Right cardiac atrium (tissue), 5 donors: ENCODE measurements at regions of chr10 and their contacts with region 1.

Region 1: GRCh38 chr10:87878664-87879459 is 15.4 kb downstream of the PTEN start:
- DNase-seq: peak in 1 of 3 donors; percentile 39
- ATAC-seq: no peak
- H3K4me3 ChIP-seq: no peak overlapping the region
- H3K27ac ChIP-seq: no peak overlapping the region
- H3K4me1 ChIP-seq: no peaks in the 10 kb centered on the region
- H3K27me3 ChIP-seq: no peaks in the 10 kb centered on the region

Region 2: DNA sequence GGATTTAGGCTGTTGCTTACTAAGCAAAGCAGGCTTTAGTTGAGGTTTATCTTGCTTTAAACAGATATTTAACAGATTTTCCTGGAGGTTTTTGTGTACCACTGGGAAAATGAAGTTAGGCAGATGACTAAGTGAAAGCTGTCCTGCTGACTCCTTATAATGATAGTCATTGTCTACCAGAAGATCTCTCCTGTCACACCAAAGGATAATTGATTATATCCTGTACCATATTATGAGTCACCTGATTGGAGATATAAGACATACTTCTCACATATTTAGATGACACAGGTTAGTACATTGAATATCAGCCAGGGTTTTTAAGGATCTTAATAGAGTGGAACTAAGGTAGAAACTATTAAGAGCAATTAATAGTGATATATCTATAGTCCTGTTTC is 53.0 kb after region 1 on chr10:
- intact Hi-C with region 1: loop called in 1 of 4 experiments (anchors 10 kb)
- DNase-seq: no peak
- ATAC-seq: no peak
- H3K4me3 ChIP-seq: no peak overlapping the region
- H3K27ac ChIP-seq: no peak overlapping the region
- H3K4me1 ChIP-seq: peaks cover 4% of the 10 kb centered on the region
- H3K27me3 ChIP-seq: no peaks in the 10 kb centered on the region